ENCODE measurements at regions of chr1 and their contacts with region 1.

Region 1: GRCh38 chr1:59759156-59759925 is 55.4 kb upstream of the HOOK1 start:
- DNase-seq: peak; percentile 89
- ATAC-seq: peak; percentile 96

Region 2: GRCh38 chr1:58515794-58516401 is 1243.4 kb before region 1 on chr1:
- intact Hi-C with region 1: loop called (anchors 10 kb)
- DNase-seq: no peak
- ATAC-seq: peak; percentile 57

Region 3: GRCh38 chr1:58896246-58897183 is 862.8 kb before region 1 on chr1:
- intact Hi-C with region 1: loop called (anchors 5 kb)
- DNase-seq: peak; percentile 83
- ATAC-seq: peak; percentile 81

Region 4: GRCh38 chr1:59296358-59297256 is 462.7 kb before region 1 on chr1 and contains the start of gene FGGY:
- intact Hi-C with region 1: loop called (anchors 2 kb)
- DNase-seq: peak; percentile 99
- ATAC-seq: peak; percentile 96
- total RNA-seq, gene FGGY: 28.5 TPM

Region 5: GRCh38 chr1:59384443-59384842 is 374.9 kb before region 1 on chr1:
- intact Hi-C with region 1: no loop called
- DNase-seq: no peak
- ATAC-seq: no peak

Region 6: DNA sequence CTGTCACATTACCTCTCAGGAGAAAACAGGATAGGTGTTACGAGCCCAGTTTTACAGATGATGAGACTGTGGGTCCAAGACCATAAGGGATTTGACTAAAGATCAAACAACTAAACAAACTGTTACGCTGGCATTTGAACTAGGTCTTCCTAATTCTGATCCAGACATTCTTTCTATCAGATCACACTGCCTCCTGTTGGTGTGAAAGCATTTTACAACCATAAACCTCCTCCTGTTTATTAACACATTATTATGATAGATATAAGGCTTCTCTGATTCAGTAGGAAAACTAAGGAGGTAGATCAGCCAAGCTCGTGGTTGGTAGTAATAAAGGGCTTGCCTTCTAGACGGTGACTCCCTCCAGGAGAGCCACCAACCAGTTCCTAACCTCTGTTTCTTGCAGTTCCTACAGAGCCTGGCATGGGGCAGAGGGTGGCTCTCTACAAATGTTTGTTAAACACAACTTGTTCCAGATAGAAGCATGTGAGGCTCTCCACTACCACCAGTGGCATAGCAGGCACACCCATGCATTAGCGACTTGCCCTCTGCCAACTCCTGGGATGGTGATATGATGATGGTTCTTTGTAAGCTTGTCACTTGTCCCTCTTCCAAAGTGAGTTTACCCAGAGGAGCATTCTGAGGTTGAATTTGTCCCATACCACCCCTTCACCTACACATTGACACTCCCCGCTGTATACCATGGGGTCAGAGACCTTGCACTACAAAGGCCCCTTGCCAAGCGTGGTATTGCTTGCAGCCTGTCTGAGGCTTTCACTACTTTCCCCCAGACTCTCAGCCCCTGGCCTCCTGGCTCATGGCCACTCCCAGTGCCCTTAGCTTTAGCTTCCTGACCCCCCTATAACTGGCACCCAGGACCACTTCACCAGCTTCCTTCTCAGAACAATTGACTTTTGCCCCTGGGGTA is 41.0 kb before region 1 on chr1:
- intact Hi-C with region 1: loop called (anchors 5 kb)
- DNase-seq: no peak
- ATAC-seq: peak; percentile 76

Region 7: DNA sequence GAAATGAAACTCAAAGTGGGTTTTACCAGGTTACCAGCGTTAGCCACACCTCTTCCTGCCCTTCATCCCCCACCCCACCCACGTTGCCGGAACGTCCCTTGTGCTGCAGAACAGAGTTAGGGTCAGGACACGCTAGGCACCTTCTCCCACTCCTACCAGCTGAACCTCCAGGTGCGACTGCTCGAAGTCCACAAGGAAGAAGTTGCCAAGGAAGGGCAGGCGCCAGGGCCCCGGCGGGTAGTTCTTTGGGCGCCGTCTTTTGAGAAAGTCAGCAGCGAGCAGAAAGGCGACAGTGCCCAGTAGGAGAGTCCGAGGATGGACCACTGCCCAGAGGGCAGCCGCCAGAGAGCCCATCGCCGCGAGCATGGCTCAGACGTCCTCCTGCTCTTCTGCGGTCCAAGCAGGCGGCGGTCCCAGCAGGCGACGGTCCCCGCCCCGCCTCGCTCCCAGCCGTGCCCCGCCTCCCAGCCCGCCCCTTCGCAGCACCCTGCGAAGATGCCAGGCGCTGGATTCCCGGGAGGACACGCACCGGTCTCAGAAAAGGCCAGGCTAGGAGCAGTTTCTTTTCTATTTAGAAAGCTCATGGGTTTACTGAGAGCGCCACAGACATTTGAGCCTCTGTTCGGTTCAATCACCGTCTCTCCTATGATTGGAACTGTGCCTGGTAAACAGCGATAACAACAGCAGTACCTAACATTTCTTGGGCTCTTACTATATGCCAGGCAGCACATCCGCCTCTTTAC is 167.2 kb after region 1 on chr1 and contains the start of gene CYP2J2:
- intact Hi-C with region 1: no loop called
- DNase-seq: peak; percentile 81
- ATAC-seq: peak; percentile 97
- total RNA-seq, gene CYP2J2: 76.4 TPM

Region 8: GRCh38 chr1:60376196-60376848 is 617.0 kb after region 1 on chr1:
- intact Hi-C with region 1: no loop called
- DNase-seq: no peak
- ATAC-seq: no peak